ENCODE measurements at regions of chr6 and their contacts with region 1.

Region 1: DNA sequence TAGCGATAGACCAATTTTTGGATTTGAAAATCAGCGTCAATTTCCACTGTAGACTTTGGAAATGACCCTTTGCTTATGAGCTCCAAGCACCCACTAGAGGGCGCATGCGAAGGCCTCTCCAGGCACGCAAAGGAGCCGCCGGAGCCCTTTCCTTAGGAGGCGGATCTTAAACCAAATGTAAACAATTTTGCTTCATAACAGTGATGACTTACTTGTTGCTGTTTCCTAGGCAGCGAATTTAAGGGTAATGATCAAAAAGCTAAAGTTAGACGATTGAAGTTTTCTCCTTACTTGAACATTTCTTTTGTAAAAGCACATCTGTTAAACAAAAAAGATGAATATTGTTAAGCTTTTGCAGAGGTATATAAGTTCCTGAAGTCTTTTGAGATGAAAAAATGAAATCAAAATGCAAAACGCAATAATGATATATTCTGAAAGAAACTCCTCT is 29.2 kb upstream of the EXOC2 start:
- DNase-seq: peak; percentile 76
- H3K4me3 ChIP-seq: no peak overlapping the region
- H3K27ac ChIP-seq: no peak overlapping the region
- H3K27me3 ChIP-seq: peaks cover 3% of the 10 kb centered on the region
- CTCF ChIP-seq: peak; percentile 98

Region 2: GRCh38 chr6:599576-600448 is 122.3 kb before region 1 on chr6:
- CTCF ChIA-PET with region 1: interaction called, 59 read pairs
- POLR2A ChIA-PET with region 1: no interaction called
- DNase-seq: no peak
- H3K4me3 ChIP-seq: no peak overlapping the region
- H3K27ac ChIP-seq: no peak overlapping the region
- H3K27me3 ChIP-seq: no peaks in the 10 kb centered on the region
- CTCF ChIP-seq: no peak

Region 3: GRCh38 chr6:683742-684440 is 38.2 kb before region 1 on chr6:
- CTCF ChIA-PET with region 1: interaction called, 14 read pairs
- POLR2A ChIA-PET with region 1: no interaction called
- DNase-seq: peak; percentile 79
- H3K4me3 ChIP-seq: peak overlapping the region; percentile 54
- H3K27ac ChIP-seq: peak overlapping the region; percentile 60
- H3K27me3 ChIP-seq: no peaks in the 10 kb centered on the region
- CTCF ChIP-seq: no peak

Region 4: DNA sequence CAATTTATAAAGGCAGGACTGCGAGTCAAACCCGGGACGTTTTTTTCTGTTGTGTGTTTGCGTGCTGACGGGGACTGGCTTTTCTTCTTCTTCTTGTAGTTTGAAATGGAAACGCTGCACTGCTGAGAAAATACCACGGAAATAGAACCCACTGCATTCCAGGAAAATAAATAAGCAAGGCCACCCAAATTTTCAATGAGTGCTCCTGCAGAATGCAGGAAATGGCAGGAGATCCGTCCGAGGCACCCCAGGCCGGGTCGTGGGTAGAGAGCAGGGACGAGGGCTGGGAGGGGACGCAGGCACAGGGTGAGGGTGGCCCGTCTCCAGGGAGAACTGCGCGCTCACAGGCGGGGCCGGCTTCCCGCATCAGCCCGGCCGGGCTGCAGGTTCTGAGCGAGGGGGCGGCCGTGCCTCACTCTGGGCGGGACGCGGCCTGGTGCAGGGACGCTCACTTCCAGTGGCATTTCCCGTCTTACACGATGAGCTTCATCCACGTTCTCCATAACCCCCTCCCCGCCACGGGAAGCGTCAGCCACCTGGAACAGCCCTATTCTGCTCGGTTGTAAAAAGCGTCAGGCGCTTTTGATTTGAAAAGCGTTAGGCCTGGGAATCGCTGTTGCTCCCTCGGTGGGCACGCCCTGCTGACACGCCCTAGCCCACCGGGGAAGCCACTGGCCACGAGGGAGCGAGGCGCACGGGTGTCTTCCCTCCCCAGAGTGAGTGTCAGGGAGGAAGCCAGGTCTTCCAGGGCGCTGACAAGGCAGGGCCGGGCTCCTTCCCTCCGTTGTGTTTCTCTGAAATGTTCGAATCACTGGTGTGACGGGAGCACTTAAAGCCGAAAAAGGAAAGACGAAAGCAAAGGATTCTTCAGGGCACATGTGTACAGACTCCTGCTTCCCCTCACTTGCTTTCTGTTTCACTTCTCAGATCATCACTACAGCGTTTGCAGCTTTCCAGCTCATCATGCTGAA is 11.2 kb before region 1 on chr6:
- CTCF ChIA-PET with region 1: interaction called, 67 read pairs
- POLR2A ChIA-PET with region 1: no interaction called
- DNase-seq: no peak
- H3K4me3 ChIP-seq: peak overlapping the region; percentile 70
- H3K27ac ChIP-seq: peak overlapping the region; percentile 95
- H3K27me3 ChIP-seq: no peaks in the 10 kb centered on the region
- CTCF ChIP-seq: no peak

Region 5: GRCh38 chr6:939526-940252 is 217.6 kb after region 1 on chr6:
- CTCF ChIA-PET with region 1: no interaction called
- POLR2A ChIA-PET with region 1: no interaction called
- DNase-seq: no peak
- H3K4me3 ChIP-seq: no peak overlapping the region
- H3K27ac ChIP-seq: no peak overlapping the region
- H3K27me3 ChIP-seq: peaks cover 5% of the 10 kb centered on the region
- CTCF ChIP-seq: no peak

Region 6: GRCh38 chr6:1424306-1424928 is 702.3 kb after region 1 on chr6:
- CTCF ChIA-PET with region 1: interaction called, 10 read pairs
- POLR2A ChIA-PET with region 1: no interaction called
- DNase-seq: no peak
- H3K4me3 ChIP-seq: no peak overlapping the region
- H3K27ac ChIP-seq: no peak overlapping the region
- H3K27me3 ChIP-seq: peaks cover 12% of the 10 kb centered on the region
- CTCF ChIP-seq: peak; percentile 78

Measured in AG04450 (cell line).